Left cardiac atrium (tissue), 4 donors: ENCODE measurements at regions of chr12 and their contacts with region 1.

Region 1: DNA sequence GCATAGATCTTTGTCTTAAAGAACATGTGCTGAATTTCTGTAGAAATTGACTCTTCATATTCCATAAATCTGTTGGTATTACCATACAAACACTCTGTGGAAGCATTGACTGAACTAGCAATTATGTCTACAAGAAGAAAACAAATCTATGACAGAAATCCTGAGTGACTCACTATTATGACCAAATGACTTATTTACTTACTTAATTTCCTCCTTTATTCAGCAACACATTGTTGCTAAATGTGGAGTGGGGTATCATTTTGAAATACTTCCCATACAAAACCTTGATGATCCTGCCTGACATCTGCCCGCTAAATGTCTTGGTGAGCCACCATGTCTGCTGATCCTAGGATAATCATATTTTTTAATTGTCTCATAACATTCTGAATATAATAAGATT is 99.1 kb upstream of the SLCO1C1 start:
- DNase-seq: no peak
- ATAC-seq: no peak

Region 2: GRCh38 chr12:20463913-20464524 is 132.0 kb before region 1 on chr12:
- intact Hi-C with region 1: loop called in 1 of 2 experiments (anchors 10 kb)
- DNase-seq: no peak
- ATAC-seq: no peak

Region 3: GRCh38 chr12:20696181-20696905 is 100.3 kb after region 1 on chr12:
- intact Hi-C with region 1: no loop called
- DNase-seq: peak; percentile 25
- ATAC-seq: peak; percentile 53 to 87